ENCODE measurements at regions of chr16 and their contacts with region 1.

Region 1: DNA sequence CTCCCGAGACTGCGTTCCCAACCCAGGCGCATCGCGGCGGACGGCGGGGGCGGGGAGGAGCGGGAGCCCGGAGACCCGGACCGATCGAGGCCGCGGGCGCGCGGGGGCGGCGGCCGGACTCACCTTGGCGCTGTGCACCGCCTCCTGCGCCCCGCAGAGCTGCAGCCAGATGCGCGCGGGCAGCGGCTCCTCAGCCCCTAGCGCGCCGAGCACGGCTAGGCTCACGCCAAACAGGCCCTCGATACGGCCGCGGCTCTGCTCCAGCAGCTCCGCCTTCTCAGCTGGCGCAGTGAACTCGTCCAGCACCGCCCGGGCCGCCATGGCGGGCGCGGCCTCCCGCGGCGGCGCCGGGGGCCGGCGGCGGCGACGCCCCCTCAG is 339 bp downstream of the N4BP1 start:
- DNase-seq: peak; percentile 55 to 78
- ATAC-seq: peak; percentile 47 to 83 (median 63)
- H3K4me3 ChIP-seq: peak overlapping the region; percentile 92 to 99 (median 98)
- H3K27ac ChIP-seq: peak overlapping the region; percentile 83 to 97 (median 92)
- H3K4me1 ChIP-seq: peaks cover 13 to 82% (median 69%) of the 10 kb centered on the region in 9 donors
- H3K27me3 ChIP-seq: no peaks in the 10 kb centered on the region
- CTCF ChIP-seq: no peak

Region 2: GRCh38 chr16:48365581-48366164 is 244.0 kb before region 1 on chr16:
- intact Hi-C with region 1: loop called in 1 of 10 experiments (anchors 5 kb)
- DNase-seq: peak; percentile 91
- ATAC-seq: peak; percentile 98 to 100 (median 99)
- H3K4me3 ChIP-seq: peak overlapping the region; percentile 29 to 71 (median 63)
- H3K27ac ChIP-seq: peak overlapping the region; percentile 5 to 88 (median 79)
- H3K4me1 ChIP-seq: peaks cover 7 to 71% (median 49%) of the 10 kb centered on the region in 9 donors
- H3K27me3 ChIP-seq: no peaks in the 10 kb centered on the region
- CTCF ChIP-seq: peak in 4 of 9 donors; percentile 7 to 34 (median 26)

Region 3: DNA sequence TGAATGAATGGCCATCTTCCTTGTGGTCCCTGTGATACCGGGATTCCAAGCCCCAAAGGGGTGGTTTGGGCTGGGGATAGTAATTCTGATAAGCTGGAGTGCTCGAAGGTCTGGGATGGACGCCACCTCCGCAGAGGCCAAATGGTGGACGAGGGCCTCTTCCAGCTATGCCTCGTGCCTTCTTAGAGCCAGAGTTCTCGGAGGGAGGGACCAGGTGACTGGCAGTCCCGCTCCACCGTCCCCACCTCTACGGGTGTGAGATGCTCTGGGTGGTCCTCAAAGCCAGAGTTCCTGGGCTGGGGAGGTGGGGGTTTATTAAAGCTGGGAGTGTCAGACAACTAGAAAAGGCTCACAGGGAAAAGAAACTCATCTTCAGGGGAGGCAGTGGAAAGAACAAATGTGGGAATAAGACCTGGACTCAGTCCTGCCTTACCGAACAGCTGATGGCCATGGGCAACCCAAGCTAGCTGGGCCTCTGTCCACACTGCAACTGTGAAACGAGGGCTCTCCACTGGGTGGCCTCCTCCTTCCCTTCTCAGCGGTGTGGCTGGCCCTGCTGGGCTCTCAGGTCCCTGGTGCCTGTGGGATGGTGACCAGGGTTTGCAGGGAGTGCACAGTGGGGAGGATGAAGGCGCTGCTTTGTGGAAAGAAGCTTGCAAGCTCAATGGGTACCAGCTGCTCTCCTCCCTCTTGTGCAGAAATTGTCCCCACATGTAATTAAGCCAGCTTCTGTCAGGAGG is 74.9 kb before region 1 on chr16:
- intact Hi-C with region 1: no loop called
- DNase-seq: no peak
- ATAC-seq: no peak
- H3K4me3 ChIP-seq: no peak overlapping the region
- H3K27ac ChIP-seq: no peak overlapping the region
- H3K4me1 ChIP-seq: peaks cover 26 to 58% (median 41%) of the 10 kb centered on the region in 9 donors
- H3K27me3 ChIP-seq: no peaks in the 10 kb centered on the region
- CTCF ChIP-seq: no peak

Region 4: DNA sequence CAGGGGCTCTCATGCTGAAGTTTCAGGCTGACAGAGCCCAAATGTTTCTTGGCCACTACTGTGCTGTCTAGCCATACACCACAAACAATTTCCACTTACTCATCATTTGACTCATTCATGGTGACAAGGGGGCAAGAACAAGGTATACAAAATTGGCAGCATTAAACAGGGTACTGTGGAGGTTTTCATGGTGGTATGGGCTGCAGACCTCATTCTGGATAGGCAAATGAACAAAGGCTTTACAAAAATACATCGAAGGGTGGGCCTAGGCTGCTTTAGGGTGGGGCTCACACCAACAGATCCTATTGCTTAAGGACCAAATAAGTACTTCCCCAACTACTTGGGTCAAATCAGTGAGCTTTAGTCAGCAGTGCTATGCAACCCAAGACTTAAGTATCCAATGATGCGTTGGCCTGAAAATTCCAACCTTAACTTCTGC is 52.7 kb before region 1 on chr16:
- intact Hi-C with region 1: loop called in 3 of 10 experiments (anchors 5 kb)
- DNase-seq: no peak
- ATAC-seq: peak in 3 of 8 donors; percentile 20 to 46 (median 20)
- H3K4me3 ChIP-seq: no peak overlapping the region
- H3K27ac ChIP-seq: peak overlapping the region in 3 of 10 donors; percentile 15 to 65 (median 22)
- H3K4me1 ChIP-seq: peaks cover 16 to 99% (median 83%) of the 10 kb centered on the region in 9 donors
- H3K27me3 ChIP-seq: no peaks in the 10 kb centered on the region
- CTCF ChIP-seq: no peak

Region 5: GRCh38 chr16:48565752-48566151 is 43.9 kb before region 1 on chr16:
- intact Hi-C with region 1: loop called in 3 of 10 experiments (anchors 5 kb)
- DNase-seq: no peak
- ATAC-seq: no peak
- H3K4me3 ChIP-seq: no peak overlapping the region
- H3K27ac ChIP-seq: no peak overlapping the region
- H3K4me1 ChIP-seq: peaks cover 0 to 61% (median 30%) of the 10 kb centered on the region in 9 donors
- H3K27me3 ChIP-seq: no peaks in the 10 kb centered on the region
- CTCF ChIP-seq: no peak

Region 6: DNA sequence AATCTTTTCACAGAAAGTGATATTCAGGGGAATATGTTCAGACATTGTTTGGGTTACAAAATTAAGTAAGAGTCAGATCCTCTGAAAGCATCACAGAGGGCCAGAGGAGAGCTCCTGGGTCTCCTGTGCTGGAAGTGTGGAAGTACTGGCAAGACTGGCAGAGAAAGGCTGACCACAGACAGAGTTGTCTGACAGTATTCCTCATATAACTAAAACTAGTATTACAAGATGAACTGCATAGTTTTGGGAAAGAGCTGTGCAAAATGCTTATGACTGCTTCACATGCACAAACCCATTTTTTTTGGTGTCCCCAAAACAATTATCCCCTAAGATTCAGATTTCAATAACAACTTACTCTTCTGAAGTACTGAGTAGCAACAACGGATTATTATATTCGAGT is 34.9 kb before region 1 on chr16:
- intact Hi-C with region 1: loop called in 2 of 10 experiments (anchors 5 kb)
- DNase-seq: no peak
- ATAC-seq: peak in 1 of 8 donors; percentile 39
- H3K4me3 ChIP-seq: no peak overlapping the region
- H3K27ac ChIP-seq: no peak overlapping the region
- H3K4me1 ChIP-seq: peaks cover 2 to 72% (median 60%) of the 10 kb centered on the region in 9 donors
- H3K27me3 ChIP-seq: no peaks in the 10 kb centered on the region
- CTCF ChIP-seq: no peak

Measured in heart right ventricle (tissue), 16 donors.